GM10248 (cell line): ENCODE measurements at regions of chr18 and their contacts with region 1.

Region 1: GRCh38 chr18:3129053-3129864 is 90.5 kb downstream of the MYOM1 start:
- DNase-seq: peak; percentile 81
- CTCF ChIP-seq: peak; percentile 95

Region 2: DNA sequence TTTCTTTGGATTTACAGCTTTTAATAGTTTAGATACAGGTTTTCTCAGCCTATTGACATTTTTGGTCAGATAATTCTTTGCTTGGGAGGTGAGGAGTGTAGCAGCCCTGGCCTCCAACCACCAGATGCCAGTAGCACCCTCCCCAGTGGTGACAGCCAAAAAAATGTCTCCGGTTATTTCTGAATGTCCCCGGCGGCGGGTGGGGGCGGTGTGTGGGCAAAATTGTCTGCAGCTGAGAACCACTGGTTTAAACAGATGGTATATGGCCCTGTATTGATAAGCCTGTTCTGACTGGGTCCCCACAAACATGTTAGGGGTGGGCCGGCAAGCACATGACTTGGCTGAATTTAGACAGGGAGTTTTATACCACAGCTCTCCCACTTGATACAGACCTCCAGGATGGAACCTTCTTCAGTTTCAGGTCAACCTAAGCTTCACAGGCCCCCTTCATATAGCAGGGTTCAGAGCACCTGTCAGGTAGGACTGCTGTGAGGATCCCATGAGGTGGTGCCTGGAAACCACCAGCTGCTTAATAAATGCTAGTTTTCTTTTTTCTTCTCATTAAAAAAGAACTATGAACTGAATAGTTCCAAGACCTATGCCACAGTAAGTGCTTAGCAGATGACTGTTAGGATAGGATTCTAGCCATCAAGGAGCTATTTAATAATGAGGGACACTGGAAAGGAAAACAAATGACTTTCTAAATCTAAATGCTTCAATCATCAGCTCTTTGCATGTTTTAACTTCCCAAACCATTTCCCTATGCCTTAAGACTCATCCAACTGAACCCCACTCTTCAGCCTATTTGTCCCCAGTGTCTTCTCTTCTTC is 134.4 kb before region 1 on chr18:
- CTCF ChIA-PET with region 1: interaction called, 31 read pairs
- POLR2A ChIA-PET with region 1: no interaction called
- DNase-seq: peak; percentile 60
- CTCF ChIP-seq: peak; percentile 68

Region 3: GRCh38 chr18:3088449-3088848 is 40.8 kb before region 1 on chr18:
- CTCF ChIA-PET with region 1: interaction called, 11 read pairs
- POLR2A ChIA-PET with region 1: no interaction called
- DNase-seq: no peak
- CTCF ChIP-seq: no peak

Region 4: GRCh38 chr18:3100498-3101132 is 28.6 kb before region 1 on chr18:
- CTCF ChIA-PET with region 1: interaction called, 11 read pairs
- POLR2A ChIA-PET with region 1: no interaction called
- DNase-seq: no peak
- CTCF ChIP-seq: no peak

Region 5: GRCh38 chr18:3117493-3118192 is 11.6 kb before region 1 on chr18:
- CTCF ChIA-PET with region 1: interaction called, 19 read pairs
- POLR2A ChIA-PET with region 1: no interaction called
- DNase-seq: no peak
- CTCF ChIP-seq: no peak

Region 6: DNA sequence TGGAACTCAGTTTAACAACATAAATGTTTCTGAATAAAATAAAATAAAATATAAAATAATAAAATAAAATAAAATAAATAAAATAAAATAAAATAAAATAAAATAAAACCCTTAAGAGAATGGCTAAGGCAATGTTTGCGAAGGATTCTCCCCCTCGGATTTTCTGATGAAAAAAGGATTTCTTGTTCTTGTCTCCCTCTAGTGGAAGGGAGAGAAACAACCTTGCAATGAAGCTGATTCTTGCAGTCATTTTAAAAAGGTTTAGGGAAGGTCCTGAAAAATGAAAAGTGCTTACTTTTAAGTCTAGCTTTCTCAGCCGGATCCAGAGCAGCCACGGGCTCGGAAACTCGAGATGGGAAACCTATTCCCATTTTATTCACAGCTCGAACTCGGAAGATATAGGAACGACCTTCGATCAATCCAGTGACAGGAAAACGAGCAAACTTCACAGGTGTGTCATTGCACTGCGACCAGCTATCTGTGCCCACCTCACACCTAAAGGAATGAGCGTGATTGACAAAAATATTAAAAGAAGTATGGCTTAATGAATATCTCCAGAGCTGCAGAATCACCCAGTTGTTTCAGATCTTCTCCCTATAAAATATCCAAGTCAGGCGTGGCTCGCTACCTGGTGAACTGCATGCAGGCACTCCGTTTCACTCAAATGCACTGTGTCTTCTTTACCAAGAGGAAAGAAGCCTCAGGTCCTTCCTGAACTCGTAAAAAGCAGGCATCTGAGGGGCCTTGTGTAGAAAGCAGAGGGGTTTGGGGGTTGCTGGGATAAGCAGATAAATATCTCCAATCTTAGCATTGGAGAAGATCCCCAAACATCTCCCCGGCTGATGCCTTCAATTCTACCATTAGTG is 22.4 kb after region 1 on chr18:
- CTCF ChIA-PET with region 1: interaction called, 17 read pairs
- POLR2A ChIA-PET with region 1: no interaction called
- DNase-seq: peak; percentile 65
- CTCF ChIP-seq: peak; percentile 71

Region 7: GRCh38 chr18:3177902-3178687 is 48.8 kb after region 1 on chr18:
- CTCF ChIA-PET with region 1: interaction called, 14 read pairs
- POLR2A ChIA-PET with region 1: interaction called, 3 read pairs
- DNase-seq: peak; percentile 82
- CTCF ChIP-seq: no peak